ENCODE measurements at regions of chr5 and their contacts with region 1.

Region 1: GRCh38 chr5:119411935-119412602 is 40.2 kb upstream of the HSD17B4 start:
- DNase-seq: peak in 1 of 2 donors; percentile 71
- H3K4me3 ChIP-seq: peak overlapping the region; percentile 2
- CTCF ChIP-seq: peak in 1 of 3 donors; percentile 57
- POLR2A ChIP-seq: no peak

Region 2: GRCh38 chr5:118987988-118988865 is 423.8 kb before region 1 on chr5 and contains the start of gene DTWD2:
- intact Hi-C with region 1: loop called (anchors 5 kb)
- DNase-seq: peak; percentile 86 to 97
- H3K4me3 ChIP-seq: peak within 1 kb of the TSS; percentile 72
- CTCF ChIP-seq: peak in 1 of 3 donors; percentile 58
- POLR2A ChIP-seq: no peak
- total RNA-seq, gene DTWD2: 4.8 to 15.6 (median 9.4) TPM

Region 3: DNA sequence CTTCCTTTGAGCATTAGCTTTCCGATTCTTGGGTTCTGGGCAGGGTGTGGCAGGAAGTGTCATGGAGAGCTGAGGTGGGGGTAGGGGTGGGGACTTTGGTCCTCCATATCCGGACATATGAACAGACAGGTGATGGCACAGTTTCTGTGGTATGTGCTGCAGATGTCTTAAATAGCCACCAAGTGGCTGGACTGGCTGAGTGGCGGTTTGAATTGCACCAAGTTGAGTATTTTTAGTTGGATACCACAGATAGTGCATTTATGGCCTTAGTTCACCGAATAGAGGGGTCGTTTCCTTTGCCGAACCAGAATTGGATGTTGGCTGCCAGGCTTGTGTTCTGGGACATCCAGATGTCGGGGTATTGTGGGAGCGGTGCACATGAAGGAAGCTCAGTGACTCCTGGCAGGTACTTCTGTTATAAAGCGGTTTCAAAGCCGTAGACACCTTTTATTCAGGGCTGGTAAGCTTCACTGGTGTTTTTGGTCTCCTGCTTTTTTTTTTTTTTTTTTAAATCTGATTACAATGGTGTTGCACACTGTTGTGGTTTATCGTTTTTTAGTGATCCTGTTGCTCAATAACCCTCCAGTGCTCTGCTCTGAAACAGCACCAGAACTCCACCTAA is 71.4 kb before region 1 on chr5:
- intact Hi-C with region 1: loop called (anchors 10 kb)
- DNase-seq: no peak
- H3K4me3 ChIP-seq: no peak overlapping the region
- CTCF ChIP-seq: no peak
- POLR2A ChIP-seq: no peak

Measured in lower leg skin (tissue), 4 donors.